Tibial artery (tissue), 4 donors: ENCODE measurements at regions of chr12 and their contacts with region 1.

Region 1: DNA sequence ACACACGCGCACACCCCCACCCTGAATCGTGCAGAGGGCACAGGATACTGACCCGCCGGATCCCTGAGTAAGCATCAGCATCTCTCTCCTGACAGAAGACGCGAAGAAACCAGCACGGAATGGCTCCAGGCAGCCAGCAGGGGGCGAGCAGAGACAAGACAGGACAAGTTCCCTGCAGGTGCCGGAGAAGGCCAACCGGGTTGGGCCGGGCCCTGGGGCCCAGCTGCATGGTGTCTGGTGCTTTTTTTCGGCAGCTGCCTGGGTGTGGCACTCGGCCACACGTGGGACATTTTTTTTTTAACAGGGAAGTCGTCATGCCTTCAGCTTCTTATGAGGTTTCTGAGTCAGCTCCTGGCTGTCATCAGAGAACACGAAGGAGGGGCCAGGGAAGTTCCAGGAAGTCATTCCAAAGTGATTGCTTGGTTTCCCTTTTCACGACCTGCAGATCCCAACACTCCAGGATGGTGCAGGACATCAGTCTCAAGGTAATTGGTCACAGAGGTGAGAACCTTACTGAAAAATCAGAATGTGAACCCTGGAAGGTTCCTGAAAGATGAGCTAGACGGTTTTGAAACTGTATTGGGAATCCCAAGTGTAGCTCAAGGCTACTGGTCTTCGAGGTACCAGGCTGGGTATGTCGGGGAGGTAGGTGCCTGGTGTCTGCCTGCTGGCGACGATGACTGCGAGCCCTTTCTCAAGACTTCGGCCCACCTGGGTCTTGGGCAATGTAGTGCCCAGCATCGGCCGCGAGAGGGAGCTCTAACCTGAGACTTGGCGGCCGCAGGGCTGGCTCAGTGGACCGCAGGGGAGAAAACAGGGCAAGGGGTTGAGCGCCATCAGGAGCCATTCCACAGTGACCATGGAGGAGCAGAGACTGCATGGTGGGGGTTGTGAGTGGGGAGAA is 190.8 kb upstream of the PRMT8 start:
- DNase-seq: peak; percentile 80 to 90
- H3K4me3 ChIP-seq: peak overlapping the region; percentile 24 to 43
- H3K27ac ChIP-seq: peak overlapping the region in 1 of 2 donors; percentile 2
- H3K4me1 ChIP-seq: peaks cover 0 to 31% (median 29%) of the 10 kb centered on the region in 4 donors
- H3K27me3 ChIP-seq: peaks cover 0 to 25% of the 10 kb centered on the region in 2 donors
- CTCF ChIP-seq: peak; percentile 86 to 90

Region 2: GRCh38 chr12:3398196-3398789 is 98.1 kb after region 1 on chr12:
- intact Hi-C with region 1: no loop called
- DNase-seq: no peak
- H3K4me3 ChIP-seq: no peak overlapping the region
- H3K27ac ChIP-seq: no peak overlapping the region
- H3K4me1 ChIP-seq: no peaks in the 10 kb centered on the region
- H3K27me3 ChIP-seq: peaks cover 0 to 17% of the 10 kb centered on the region in 2 donors
- CTCF ChIP-seq: no peak

Region 3: GRCh38 chr12:3803865-3804472 is 503.8 kb after region 1 on chr12:
- intact Hi-C with region 1: loop called (anchors 5 kb)
- DNase-seq: peak; percentile 71
- H3K4me3 ChIP-seq: no peak overlapping the region
- H3K27ac ChIP-seq: no peak overlapping the region
- H3K4me1 ChIP-seq: no peaks in the 10 kb centered on the region
- H3K27me3 ChIP-seq: no peaks in the 10 kb centered on the region
- CTCF ChIP-seq: peak; percentile 55 to 72